Activated CD8-positive, alpha-beta T cell treated with anti-CD3 and anti-CD28 coated beads for 36 hours (primary cell): ENCODE measurements at regions of chr13 and their contacts with region 1.

Region 1: DNA sequence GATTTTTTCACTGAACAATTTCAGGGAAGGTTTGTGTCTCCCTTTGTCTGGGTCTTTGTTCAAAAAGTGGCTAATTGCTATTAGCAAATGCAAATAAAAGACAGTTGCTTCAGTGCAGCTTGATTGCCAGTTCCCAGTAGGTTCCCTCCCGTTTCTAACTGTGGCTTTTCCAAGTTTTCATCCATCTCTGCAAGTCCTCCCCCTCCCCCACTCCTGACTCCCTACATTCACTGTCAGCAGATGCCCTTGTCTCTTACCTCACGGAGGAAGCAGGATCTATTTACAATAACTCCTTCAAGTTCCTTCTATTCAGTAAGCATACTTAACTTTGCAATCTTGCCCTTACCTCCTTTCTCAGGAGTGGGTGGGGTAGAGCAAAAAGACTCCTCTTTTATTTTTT is 55.4 kb upstream of the SCEL start:
- DNase-seq: no peak
- ATAC-seq: no peak
- H3K4me3 Mint-ChIP-seq: no peak overlapping the region
- H3K27ac Mint-ChIP-seq: no peak overlapping the region
- H3K4me1 Mint-ChIP-seq: peaks cover 18% of the 10 kb centered on the region
- H3K27me3 Mint-ChIP-seq: no peaks in the 10 kb centered on the region
- CTCF ChIP-seq: no peak

Region 2: DNA sequence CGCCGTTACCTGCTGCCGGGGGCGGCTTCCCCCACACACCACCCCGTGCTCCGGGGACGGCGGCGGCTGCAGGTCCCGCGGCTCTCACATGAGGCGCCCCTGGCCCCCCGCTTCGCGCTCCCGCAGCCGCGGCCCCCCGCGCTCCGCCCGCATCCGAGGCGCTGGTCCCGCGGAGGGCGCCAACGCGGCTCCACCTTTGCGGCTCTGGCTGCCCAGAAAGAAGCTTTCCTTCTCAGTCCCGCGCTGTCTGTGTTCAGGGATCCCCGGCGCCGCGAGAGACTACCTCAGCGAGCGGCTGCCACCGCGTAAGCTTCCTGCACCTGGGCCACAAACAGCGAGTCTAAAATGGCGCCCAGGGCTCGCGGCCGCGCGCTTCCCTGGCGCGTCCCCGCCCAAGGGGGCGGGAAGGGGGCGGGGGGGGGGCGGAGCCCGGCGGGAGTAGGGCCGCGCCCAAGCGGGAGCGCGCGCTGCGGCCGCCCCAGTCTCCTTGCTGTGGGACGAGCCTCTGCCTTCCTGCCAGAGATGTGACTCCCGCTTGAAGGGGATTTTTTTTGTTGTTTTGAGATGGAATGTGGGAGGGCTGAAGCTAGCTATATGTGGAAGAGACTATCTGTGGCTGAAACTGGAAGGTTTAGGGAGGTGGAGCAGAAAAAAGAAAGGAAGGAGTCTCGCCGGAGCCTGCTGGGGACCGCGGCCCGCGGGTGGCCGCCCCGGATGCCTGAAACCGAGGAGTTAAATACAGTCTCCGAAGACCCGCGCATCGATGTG is 453.1 kb before region 1 on chr13 and contains the start of gene FBXL3:
- CTCF ChIA-PET with region 1: interaction called, 15 read pairs
- POLR2A ChIA-PET with region 1: no interaction called
- intact Hi-C with region 1: no loop called
- DNase-seq: peak; percentile 83
- ATAC-seq: peak; percentile 57
- H3K4me3 Mint-ChIP-seq: peak within 1 kb of the TSS; percentile 98
- H3K27ac Mint-ChIP-seq: peak within 1 kb of the TSS; percentile 94
- H3K4me1 Mint-ChIP-seq: peaks cover 43% of the 10 kb centered on the region
- H3K27me3 Mint-ChIP-seq: no peaks in the 10 kb centered on the region
- CTCF ChIP-seq: no peak
- total RNA-seq, gene FBXL3: 32.8 to 34.3 TPM

Region 3: DNA sequence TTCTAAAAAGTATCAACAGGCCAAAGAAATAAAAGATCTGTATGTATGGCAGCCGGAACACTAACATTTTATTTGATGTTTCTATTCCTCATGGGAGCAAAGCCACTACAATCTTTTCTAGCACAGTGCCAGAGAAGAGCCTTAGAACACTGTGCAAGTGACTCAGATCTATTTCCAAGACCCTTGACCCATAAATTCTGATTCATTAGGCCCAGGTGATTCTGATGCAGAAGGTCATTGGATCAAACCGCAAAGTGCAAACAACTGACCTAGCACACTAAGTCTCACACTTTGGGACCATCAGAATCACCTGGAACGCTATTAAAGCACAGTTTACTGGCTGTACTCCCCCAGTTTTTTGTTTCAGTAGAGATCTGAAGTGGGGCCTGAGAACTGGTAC is 240.8 kb before region 1 on chr13:
- CTCF ChIA-PET with region 1: no interaction called
- POLR2A ChIA-PET with region 1: no interaction called
- intact Hi-C with region 1: no loop called
- DNase-seq: no peak
- ATAC-seq: no peak
- H3K4me3 Mint-ChIP-seq: no peak overlapping the region
- H3K27ac Mint-ChIP-seq: no peak overlapping the region
- H3K4me1 Mint-ChIP-seq: peaks cover 9% of the 10 kb centered on the region
- H3K27me3 Mint-ChIP-seq: no peaks in the 10 kb centered on the region
- CTCF ChIP-seq: no peak

Region 4: GRCh38 chr13:77316430-77316829 is 163.6 kb before region 1 on chr13:
- CTCF ChIA-PET with region 1: interaction called, 19 read pairs
- POLR2A ChIA-PET with region 1: interaction called, 4 read pairs
- intact Hi-C with region 1: no loop called
- DNase-seq: no peak
- ATAC-seq: no peak
- H3K4me3 Mint-ChIP-seq: no peak overlapping the region
- H3K27ac Mint-ChIP-seq: no peak overlapping the region
- H3K4me1 Mint-ChIP-seq: peaks cover 81% of the 10 kb centered on the region
- H3K27me3 Mint-ChIP-seq: no peaks in the 10 kb centered on the region
- CTCF ChIP-seq: no peak

Region 5: GRCh38 chr13:77338961-77339401 is 141.1 kb before region 1 on chr13:
- CTCF ChIA-PET with region 1: interaction called, 23 read pairs
- POLR2A ChIA-PET with region 1: no interaction called
- intact Hi-C with region 1: no loop called
- DNase-seq: no peak
- ATAC-seq: peak; percentile 38
- H3K4me3 Mint-ChIP-seq: no peak overlapping the region
- H3K27ac Mint-ChIP-seq: peak overlapping the region; percentile 4
- H3K4me1 Mint-ChIP-seq: peaks cover 25% of the 10 kb centered on the region
- H3K27me3 Mint-ChIP-seq: no peaks in the 10 kb centered on the region
- CTCF ChIP-seq: no peak

Region 6: DNA sequence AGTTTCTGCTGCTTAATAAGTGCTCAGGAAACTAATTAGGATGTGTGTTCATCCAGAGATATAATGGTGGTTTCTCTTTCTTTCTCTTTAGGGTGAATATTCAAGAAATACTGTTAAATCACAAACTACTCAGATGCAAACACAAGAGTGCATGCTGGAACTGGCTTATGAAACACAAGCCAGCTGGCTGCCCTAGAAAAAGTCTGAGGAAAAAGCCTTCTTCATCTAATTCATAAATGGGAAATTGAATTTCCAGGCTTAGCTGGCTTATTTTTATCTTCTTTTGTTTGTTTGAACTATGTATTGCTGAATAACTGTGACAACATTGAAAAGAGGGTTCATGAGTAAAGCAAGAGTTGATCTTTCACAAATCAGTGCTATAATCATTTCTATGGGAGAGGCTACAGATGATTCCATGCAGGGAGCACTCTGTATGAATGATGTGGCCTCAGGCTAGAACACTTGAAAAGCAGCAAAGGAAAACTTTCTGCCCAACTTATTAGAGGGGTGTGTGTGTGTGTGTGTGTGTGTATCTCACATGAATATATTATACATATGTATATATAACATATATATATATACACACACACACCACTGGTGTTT is 14.4 kb before region 1 on chr13:
- CTCF ChIA-PET with region 1: interaction called, 10 read pairs
- POLR2A ChIA-PET with region 1: no interaction called
- intact Hi-C with region 1: no loop called
- DNase-seq: no peak
- ATAC-seq: no peak
- H3K4me3 Mint-ChIP-seq: no peak overlapping the region
- H3K27ac Mint-ChIP-seq: no peak overlapping the region
- H3K4me1 Mint-ChIP-seq: no peaks in the 10 kb centered on the region
- H3K27me3 Mint-ChIP-seq: peaks cover 4% of the 10 kb centered on the region
- CTCF ChIP-seq: no peak